Endothelial cell of umbilical vein (primary cell): ENCODE measurements at regions of chr3 and their contacts with region 1.

Region 1: GRCh38 chr3:114383875-114384557 is 90.2 kb downstream of the TIGIT start:
- DNase-seq: peak; percentile 81
- H3K4me3 ChIP-seq: peak overlapping the region; percentile 35 to 61 (median 42)
- H3K27ac ChIP-seq: peak overlapping the region; percentile 55
- H3K4me1 ChIP-seq: peaks cover 9% of the 10 kb centered on the region
- H3K27me3 ChIP-seq: no peaks in the 10 kb centered on the region
- CTCF ChIP-seq: peak; percentile 89 to 92
- POLR2A ChIP-seq: no peak

Region 2: DNA sequence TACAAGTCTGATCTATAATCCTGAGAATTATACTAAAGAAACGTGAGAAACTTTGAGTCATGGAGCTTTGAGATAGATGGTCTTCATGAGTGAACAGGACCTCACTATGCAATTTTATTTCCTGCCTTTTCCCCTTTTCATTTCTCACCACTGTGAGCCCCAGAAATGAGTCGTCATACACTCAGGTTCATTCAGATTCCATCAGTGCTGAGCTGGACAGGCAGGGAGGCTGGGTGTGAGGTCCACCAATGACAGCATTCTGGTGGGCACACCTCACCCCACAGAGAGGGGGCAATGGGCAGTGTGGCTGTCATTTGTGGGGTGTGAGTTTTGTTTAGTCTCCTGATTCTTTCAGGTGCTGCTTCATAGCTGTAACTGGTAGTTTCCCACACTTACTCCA is 73.3 kb before region 1 on chr3:
- CTCF ChIA-PET with region 1: no interaction called
- POLR2A ChIA-PET with region 1: no interaction called
- dilution Hi-C with region 1: no loop called
- intact Hi-C with region 1: no loop called
- DNase-seq: no peak
- H3K4me3 ChIP-seq: no peak overlapping the region
- H3K27ac ChIP-seq: no peak overlapping the region
- H3K4me1 ChIP-seq: no peaks in the 10 kb centered on the region
- H3K27me3 ChIP-seq: no peaks in the 10 kb centered on the region
- CTCF ChIP-seq: no peak
- POLR2A ChIP-seq: no peak

Region 3: GRCh38 chr3:114400371-114400770 is 16.4 kb after region 1 on chr3:
- CTCF ChIA-PET with region 1: interaction called, 41 read pairs
- POLR2A ChIA-PET with region 1: no interaction called
- dilution Hi-C with region 1: no loop called
- intact Hi-C with region 1: no loop called
- DNase-seq: no peak
- H3K4me3 ChIP-seq: no peak overlapping the region
- H3K27ac ChIP-seq: no peak overlapping the region
- H3K4me1 ChIP-seq: peaks cover 6% of the 10 kb centered on the region
- H3K27me3 ChIP-seq: no peaks in the 10 kb centered on the region
- CTCF ChIP-seq: no peak
- POLR2A ChIP-seq: no peak

Region 4: DNA sequence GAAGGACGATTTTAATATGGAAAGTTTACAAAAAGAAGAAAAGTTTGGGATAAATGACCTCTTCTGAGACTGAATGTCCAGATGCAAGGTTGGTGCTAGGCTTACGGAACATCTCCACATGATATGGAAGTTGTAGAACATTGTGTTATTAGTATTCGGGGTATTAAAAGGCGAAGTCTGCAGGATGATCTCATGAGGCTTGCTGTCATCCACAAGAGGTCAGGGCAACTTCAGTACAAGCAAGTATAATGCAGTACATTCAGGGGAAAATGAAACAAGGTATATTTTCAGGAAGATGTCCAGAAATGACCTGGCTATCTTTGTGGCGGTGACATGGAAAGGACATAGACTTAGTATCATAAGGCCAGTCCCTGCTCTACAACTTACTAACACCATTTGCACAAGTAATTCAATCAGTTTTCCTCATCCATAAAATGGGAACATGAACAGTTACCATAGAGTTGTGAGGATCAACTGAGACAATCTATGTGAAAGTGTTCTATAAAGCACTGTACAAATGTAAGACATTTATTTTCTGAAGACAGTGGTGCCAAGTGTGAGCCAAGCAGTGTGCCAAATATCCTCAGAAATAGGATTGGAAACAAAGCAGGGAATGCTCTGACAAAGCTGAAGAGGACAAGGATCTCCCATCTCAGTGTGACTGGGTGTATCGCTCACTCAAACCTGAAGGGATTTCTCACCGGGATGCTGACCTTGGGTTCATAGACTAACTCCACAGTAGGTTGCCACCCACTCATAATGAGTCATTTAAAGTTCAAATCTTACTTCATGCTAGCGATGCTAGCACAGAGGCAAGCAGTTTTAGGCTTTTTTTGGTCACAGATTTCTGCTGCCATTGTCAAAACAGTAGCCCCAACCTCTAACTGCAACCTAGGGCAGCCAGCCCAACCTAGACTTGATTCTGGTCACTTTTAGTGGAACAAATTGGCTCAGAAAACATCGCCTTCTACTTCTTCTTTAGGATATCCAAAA is 28.1 kb after region 1 on chr3:
- CTCF ChIA-PET with region 1: interaction called, 23 read pairs
- POLR2A ChIA-PET with region 1: no interaction called
- dilution Hi-C with region 1: no loop called
- intact Hi-C with region 1: no loop called
- DNase-seq: peak; percentile 16
- H3K4me3 ChIP-seq: no peak overlapping the region
- H3K27ac ChIP-seq: no peak overlapping the region
- H3K4me1 ChIP-seq: peaks cover 3% of the 10 kb centered on the region
- H3K27me3 ChIP-seq: no peaks in the 10 kb centered on the region
- CTCF ChIP-seq: no peak
- POLR2A ChIP-seq: no peak

Region 5: GRCh38 chr3:114827495-114827894 is 443.5 kb after region 1 on chr3:
- CTCF ChIA-PET with region 1: interaction called, 8 read pairs
- POLR2A ChIA-PET with region 1: no interaction called
- dilution Hi-C with region 1: no loop called
- intact Hi-C with region 1: loop called (anchors 5 kb)
- DNase-seq: peak; percentile 47
- H3K4me3 ChIP-seq: no peak overlapping the region
- H3K27ac ChIP-seq: no peak overlapping the region
- H3K4me1 ChIP-seq: no peaks in the 10 kb centered on the region
- H3K27me3 ChIP-seq: no peaks in the 10 kb centered on the region
- CTCF ChIP-seq: peak; percentile 18 to 45
- POLR2A ChIP-seq: no peak

Region 6: GRCh38 chr3:115040673-115041286 is 656.8 kb after region 1 on chr3:
- CTCF ChIA-PET with region 1: interaction called, 11 read pairs
- POLR2A ChIA-PET with region 1: no interaction called
- dilution Hi-C with region 1: no loop called
- intact Hi-C with region 1: no loop called
- DNase-seq: peak; percentile 67
- H3K4me3 ChIP-seq: no peak overlapping the region
- H3K27ac ChIP-seq: no peak overlapping the region
- H3K4me1 ChIP-seq: no peaks in the 10 kb centered on the region
- H3K27me3 ChIP-seq: no peaks in the 10 kb centered on the region
- CTCF ChIP-seq: peak; percentile 58 to 59
- POLR2A ChIP-seq: no peak

Region 7: DNA sequence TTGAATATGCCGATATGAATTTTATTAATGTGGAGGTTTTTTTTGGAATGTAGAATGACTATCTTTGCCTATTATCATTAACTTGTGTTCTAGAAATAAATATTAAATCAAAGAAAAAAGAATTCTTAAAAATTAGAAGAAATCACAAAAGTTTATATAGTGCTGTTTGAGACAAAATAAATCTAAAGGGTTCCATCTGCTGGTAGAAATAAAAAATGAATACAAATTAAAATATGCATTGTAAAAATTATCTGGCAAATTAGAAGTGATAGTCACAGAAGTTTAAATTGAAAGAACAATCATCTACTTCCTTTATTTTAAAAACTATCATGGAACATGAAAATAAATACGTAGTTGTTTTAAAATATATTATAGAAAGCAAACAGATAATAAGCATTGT is 785.8 kb after region 1 on chr3:
- CTCF ChIA-PET with region 1: interaction called, 18 read pairs
- POLR2A ChIA-PET with region 1: no interaction called
- dilution Hi-C with region 1: no loop called
- intact Hi-C with region 1: loop called (anchors 5 kb)
- DNase-seq: no peak
- H3K4me3 ChIP-seq: no peak overlapping the region
- H3K27ac ChIP-seq: no peak overlapping the region
- H3K4me1 ChIP-seq: no peaks in the 10 kb centered on the region
- H3K27me3 ChIP-seq: no peaks in the 10 kb centered on the region
- CTCF ChIP-seq: no peak
- POLR2A ChIP-seq: no peak